ENCODE measurements at regions of chr3 and their contacts with region 1.

Region 1: DNA sequence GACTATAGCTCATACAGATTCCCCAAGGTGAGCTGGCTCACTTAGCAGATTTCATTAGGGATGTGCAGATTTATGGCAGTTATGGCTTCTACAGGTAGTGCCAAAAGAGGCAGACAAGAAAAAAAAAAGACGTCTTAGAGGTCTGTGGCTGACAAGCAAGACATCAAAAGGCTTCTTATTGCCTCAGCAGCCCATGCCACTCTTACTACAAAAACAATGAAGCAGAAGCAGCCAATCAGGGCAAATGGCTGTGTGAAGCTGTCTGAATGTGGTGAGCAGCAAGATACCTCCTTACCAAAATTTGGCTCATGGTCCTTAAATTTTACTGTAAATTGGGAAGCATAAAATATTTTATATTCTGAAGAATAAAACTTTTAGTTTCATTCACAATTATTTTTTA is 557.5 kb upstream of the GOLIM4 start:
- DNase-seq: no peak
- ATAC-seq: no peak
- H3K4me3 ChIP-seq: no peak overlapping the region
- H3K27ac ChIP-seq: no peak overlapping the region
- H3K4me1 ChIP-seq: no peaks in the 10 kb centered on the region
- H3K27me3 ChIP-seq: peaks cover 0 to 5% (median 0%) of the 10 kb centered on the region in 7 donors
- CTCF ChIP-seq: no peak

Region 2: DNA sequence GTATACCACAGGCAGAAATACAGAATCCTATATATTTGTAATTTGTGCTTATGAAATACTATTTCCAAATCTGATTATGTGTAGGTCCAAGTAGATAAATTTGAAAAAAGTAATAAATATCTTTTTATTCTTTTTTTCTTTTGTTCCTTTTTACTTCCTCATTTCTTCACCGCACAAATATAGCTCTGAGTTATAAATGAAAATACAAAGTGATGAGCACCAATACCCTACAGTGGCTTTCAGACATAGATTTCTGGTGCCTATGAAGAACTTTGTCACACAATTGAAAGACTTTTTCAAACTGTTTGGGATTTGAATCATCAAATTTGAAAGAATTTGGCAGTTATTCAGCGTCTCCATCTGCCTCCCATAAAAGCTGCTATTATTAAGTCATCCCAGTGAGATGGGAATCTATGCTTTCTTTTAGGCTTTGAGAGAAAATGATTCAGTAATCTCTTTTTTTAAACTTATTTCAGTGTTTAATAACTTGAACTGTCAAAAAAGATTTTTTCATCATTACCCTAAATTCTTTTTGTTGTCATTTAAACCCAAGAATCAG is 193.9 kb before region 1 on chr3:
- intact Hi-C with region 1: no loop called
- DNase-seq: no peak
- ATAC-seq: no peak
- H3K4me3 ChIP-seq: no peak overlapping the region
- H3K27ac ChIP-seq: no peak overlapping the region
- H3K4me1 ChIP-seq: no peaks in the 10 kb centered on the region
- H3K27me3 ChIP-seq: no peaks in the 10 kb centered on the region
- CTCF ChIP-seq: no peak

Region 3: GRCh38 chr3:168562419-168562818 is 90.8 kb before region 1 on chr3:
- intact Hi-C with region 1: loop called in 1 of 10 experiments (anchors 5 kb)
- DNase-seq: no peak
- ATAC-seq: no peak
- H3K4me3 ChIP-seq: no peak overlapping the region
- H3K27ac ChIP-seq: no peak overlapping the region
- H3K4me1 ChIP-seq: no peaks in the 10 kb centered on the region
- H3K27me3 ChIP-seq: no peaks in the 10 kb centered on the region
- CTCF ChIP-seq: no peak